ENCODE measurements at regions of chr6 and their contacts with region 1.

Region 1: DNA sequence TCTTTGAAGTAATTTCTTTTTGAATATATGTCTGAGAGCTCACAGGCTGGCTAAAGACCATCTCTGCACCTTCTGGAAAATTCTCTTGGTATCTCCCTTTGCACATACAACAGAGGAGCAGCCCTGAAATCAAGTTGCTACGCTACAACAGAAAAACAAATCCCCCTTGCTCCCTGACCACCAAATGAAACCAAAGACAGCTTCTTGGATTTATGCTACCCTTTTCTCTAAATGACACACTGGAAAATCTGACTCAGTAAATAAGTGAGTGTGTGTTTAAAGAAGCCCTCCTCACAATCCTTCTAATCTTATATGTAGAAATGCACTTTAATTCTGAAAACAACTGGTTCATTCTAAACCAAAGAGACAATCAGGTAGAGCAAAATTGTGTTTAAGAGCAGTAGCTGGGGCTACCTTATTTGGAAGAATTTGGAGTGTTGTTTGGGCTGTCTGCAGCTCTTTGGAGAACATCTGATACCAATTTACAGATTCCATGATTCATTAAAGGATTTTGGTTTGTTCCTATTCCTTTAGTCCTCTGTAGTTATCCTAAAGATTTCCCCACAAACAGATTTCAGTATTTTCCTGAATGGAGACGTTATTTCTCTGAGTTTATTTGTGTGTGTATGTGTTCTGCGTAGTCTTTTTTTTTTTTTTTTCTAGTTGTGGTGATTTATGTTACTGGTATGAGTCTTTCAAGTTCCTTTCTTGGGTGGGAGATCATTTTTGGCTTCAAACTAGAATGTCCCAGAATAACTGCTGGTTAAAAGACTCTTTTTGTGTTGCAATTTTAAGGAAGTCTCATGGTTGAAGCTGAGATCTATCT is 36.4 kb upstream of the UTRN start:
- DNase-seq: peak; percentile 11
- ATAC-seq: peak; percentile 57
- H3K4me3 Mint-ChIP-seq: no peak overlapping the region
- H3K27ac Mint-ChIP-seq: peak overlapping the region; percentile 17
- H3K4me1 Mint-ChIP-seq: peaks cover 17% of the 10 kb centered on the region
- H3K27me3 Mint-ChIP-seq: peaks cover 12% of the 10 kb centered on the region

Region 2: DNA sequence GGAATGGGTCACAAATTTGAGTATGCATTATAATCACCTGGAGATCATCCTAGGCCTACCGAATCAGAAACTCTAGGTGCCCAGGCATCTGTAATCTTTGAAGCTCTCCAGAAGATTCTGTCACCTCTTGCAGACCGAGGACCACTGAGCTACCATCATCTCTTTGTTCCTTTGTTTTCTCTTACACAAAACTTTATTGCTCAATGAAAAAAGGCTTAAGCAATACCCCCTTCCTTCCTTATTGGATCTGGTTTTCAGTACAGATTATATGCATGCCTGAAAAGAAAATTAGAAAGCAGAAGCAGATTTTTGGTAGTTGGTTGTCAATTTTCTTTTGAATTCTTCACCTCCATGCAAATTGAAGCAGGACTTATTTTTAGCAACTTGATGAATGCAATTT is 67.0 kb before region 1 on chr6:
- CTCF ChIA-PET with region 1: no interaction called
- POLR2A ChIA-PET with region 1: no interaction called
- intact Hi-C with region 1: no loop called
- DNase-seq: no peak
- ATAC-seq: no peak
- H3K4me3 Mint-ChIP-seq: no peak overlapping the region
- H3K27ac Mint-ChIP-seq: no peak overlapping the region
- H3K4me1 Mint-ChIP-seq: peaks cover 59% of the 10 kb centered on the region
- H3K27me3 Mint-ChIP-seq: no peaks in the 10 kb centered on the region

Region 3: GRCh38 chr6:144310765-144311164 is 62.1 kb after region 1 on chr6:
- CTCF ChIA-PET with region 1: no interaction called
- POLR2A ChIA-PET with region 1: no interaction called
- intact Hi-C with region 1: loop called in 1 of 2 experiments (anchors 1 kb)
- DNase-seq: peak; percentile 58
- ATAC-seq: peak; percentile 81
- H3K4me3 Mint-ChIP-seq: no peak overlapping the region
- H3K27ac Mint-ChIP-seq: peak overlapping the region; percentile 17
- H3K4me1 Mint-ChIP-seq: peaks cover 18% of the 10 kb centered on the region
- H3K27me3 Mint-ChIP-seq: peaks cover 11% of the 10 kb centered on the region

Region 4: GRCh38 chr6:144469144-144469575 is 220.5 kb after region 1 on chr6:
- CTCF ChIA-PET with region 1: no interaction called
- POLR2A ChIA-PET with region 1: interaction called, 12 read pairs
- intact Hi-C with region 1: no loop called
- DNase-seq: peak; percentile 41
- ATAC-seq: peak; percentile 89
- H3K4me3 Mint-ChIP-seq: peak overlapping the region; percentile 62
- H3K27ac Mint-ChIP-seq: peak overlapping the region; percentile 92
- H3K4me1 Mint-ChIP-seq: peaks cover 27% of the 10 kb centered on the region
- H3K27me3 Mint-ChIP-seq: no peaks in the 10 kb centered on the region

Measured in activated CD4-positive, alpha-beta T cell treated with anti-CD3 and anti-CD28 coated beads for 36 hours (primary cell).